Activated B cell treated with CpG ODN at 0.5 μM for 24 hours (primary cell): ENCODE measurements at regions of chr6 and their contacts with region 1.

Region 1: DNA sequence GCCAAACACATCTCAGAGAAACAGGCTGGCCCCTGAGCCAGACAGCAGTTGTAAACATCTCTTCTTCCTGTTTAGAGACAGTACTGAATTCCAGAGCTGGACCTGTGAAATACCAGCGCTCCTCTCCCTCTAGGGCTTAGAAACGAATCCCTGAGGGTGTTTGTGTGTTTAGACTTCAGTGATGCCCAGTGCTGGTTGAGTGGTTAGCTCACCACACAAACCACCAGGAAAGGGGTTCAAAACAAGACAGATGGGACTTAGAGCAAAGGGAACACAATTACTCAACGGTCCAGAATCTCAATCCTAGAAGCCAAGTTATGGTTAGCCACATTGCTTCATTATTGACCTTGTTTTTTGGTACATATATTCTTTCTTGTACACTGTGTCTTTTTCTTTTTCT is 108.7 kb upstream of the TMEM170B start:
- DNase-seq: no peak
- ATAC-seq: no peak
- H3K4me3 Mint-ChIP-seq: peak overlapping the region; percentile 33
- H3K27ac Mint-ChIP-seq: peak overlapping the region; percentile 47
- H3K4me1 Mint-ChIP-seq: peaks cover 43% of the 10 kb centered on the region
- H3K27me3 Mint-ChIP-seq: no peaks in the 10 kb centered on the region
- CTCF ChIP-seq: no peak

Region 2: GRCh38 chr6:10194816-10195639 is 1233.9 kb before region 1 on chr6:
- CTCF ChIA-PET with region 1: no interaction called
- POLR2A ChIA-PET with region 1: no interaction called
- intact Hi-C with region 1: no loop called
- DNase-seq: no peak
- ATAC-seq: no peak
- H3K4me3 Mint-ChIP-seq: no peak overlapping the region
- H3K27ac Mint-ChIP-seq: no peak overlapping the region
- H3K4me1 Mint-ChIP-seq: no peaks in the 10 kb centered on the region
- H3K27me3 Mint-ChIP-seq: no peaks in the 10 kb centered on the region
- CTCF ChIP-seq: no peak

Region 3: DNA sequence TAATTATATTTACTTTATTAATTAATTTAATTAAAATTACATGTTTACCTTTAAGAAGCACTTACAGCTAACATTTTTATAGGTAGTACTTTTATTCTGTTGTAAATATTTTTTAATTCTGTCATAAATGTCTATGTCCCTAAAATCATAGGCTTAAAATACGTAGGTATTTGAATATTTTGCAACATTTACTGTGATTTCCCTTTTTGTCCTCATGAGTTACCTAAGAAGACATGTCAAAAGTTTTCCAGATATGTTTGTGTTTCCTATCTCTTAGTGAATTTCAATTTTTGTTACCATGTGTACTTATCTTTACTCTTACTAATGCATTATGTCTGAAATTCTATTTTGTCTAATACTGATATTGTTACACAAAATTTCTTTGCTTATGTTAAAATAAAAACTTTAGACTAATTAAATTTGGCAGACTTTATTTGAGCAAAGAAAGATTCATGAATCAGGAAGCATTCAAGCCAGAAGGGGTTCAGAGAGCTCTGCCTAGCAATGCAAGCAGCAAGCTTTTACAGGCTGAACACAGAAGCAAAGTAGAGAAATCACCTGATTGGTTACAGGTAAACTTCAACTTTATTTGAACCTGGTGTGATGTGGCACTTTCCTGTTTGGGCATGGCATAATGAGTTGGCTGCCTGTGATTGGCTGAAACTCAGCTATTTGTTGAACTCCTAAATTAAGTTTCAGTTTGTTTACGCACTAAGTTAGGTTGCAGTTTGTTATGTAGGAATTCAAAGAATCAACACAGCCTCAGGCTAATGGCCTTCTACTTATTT is 14.5 kb before region 1 on chr6:
- CTCF ChIA-PET with region 1: no interaction called
- POLR2A ChIA-PET with region 1: no interaction called
- intact Hi-C with region 1: loop called (anchors 2 kb)
- DNase-seq: no peak
- ATAC-seq: peak; percentile 62
- H3K4me3 Mint-ChIP-seq: no peak overlapping the region
- H3K27ac Mint-ChIP-seq: no peak overlapping the region
- H3K4me1 Mint-ChIP-seq: peaks cover 45% of the 10 kb centered on the region
- H3K27me3 Mint-ChIP-seq: no peaks in the 10 kb centered on the region
- CTCF ChIP-seq: no peak

Region 4: DNA sequence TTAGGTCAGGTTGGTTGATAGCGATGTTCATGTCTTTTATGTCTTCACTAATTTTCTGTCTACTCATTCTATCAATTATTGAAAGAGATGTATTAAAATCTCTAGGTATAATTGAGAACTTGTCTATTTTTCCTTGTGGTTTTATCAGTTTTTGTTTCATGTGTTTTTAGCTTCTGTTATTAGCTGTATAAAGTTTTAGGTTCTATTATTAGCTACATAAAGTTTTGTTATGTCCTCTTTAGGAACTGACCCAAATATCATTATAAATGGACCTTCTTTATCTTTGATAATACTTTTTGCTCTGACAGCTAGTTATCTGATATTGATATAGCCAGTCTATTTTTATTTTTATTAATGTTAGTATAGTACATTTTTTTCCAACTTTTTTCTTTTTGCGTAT is 16.3 kb after region 1 on chr6:
- CTCF ChIA-PET with region 1: no interaction called
- POLR2A ChIA-PET with region 1: interaction called, 3 read pairs
- intact Hi-C with region 1: loop called (anchors 2 kb)
- DNase-seq: no peak
- ATAC-seq: no peak
- H3K4me3 Mint-ChIP-seq: peak overlapping the region; percentile 26
- H3K27ac Mint-ChIP-seq: peak overlapping the region; percentile 54
- H3K4me1 Mint-ChIP-seq: peaks cover 67% of the 10 kb centered on the region
- H3K27me3 Mint-ChIP-seq: no peaks in the 10 kb centered on the region
- CTCF ChIP-seq: no peak